Dorsolateral prefrontal cortex (tissue), 120 donors: ENCODE measurements at regions of chr1 and their contacts with region 1.

Region 1: DNA sequence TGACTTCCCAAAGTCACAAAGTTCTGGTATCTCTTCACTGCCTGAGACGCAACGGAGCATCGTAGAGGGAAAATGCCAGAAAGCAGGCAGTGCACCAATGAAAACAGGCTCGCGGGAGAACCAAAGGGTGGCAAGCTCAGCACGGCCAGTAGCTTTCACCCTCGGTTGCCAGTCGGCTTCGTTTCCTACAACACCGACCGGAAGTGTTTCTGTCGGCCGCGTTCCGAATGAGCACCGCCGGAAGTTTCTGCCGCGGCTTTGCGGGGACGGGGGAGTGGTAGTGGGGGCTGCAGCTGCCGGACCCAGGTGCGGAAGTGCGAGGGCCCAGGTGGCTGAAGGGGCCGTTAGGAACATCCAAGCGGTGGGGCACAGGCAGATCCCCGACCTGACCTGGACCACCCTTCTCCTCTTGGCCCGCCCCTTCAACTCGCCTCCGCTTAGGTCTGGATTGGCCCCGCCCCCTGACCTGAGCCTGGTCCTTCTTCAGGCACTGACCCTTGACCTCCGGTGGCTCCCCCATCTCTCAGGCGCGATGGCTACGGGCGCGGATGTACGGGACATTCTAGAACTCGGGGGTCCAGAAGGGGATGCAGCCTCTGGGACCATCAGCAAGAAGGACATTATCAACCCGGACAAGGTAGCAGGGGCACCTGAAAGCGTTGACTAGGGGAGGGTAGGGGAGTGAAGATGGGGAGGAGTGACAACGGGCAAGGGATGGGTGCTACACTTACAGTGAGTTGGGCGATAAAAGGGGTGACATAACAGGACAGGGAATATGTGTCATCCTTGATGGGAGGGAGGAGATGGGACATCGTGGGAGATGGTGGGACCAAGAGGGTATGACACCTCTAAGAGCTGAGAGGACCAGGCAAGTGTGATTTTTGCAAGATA is at the start of gene DMAP1:
- DNase-seq: peak; percentile 82 to 94 (median 89)
- H3K4me3 ChIP-seq: peak within 1 kb of the TSS; percentile 56 to 98 (median 91)
- H3K27ac ChIP-seq: peak within 1 kb of the TSS; percentile 28 to 95 (median 88)
- H3K27me3 ChIP-seq: no peaks in the 10 kb centered on the region
- CTCF ChIP-seq: peak in 48 of 56 donors; percentile 9 to 66 (median 41)
- total RNA-seq, gene DMAP1: 46.6 to 81.3 (median 59.7) TPM

Region 2: GRCh38 chr1:44294588-44295007 is 81.1 kb after region 1 on chr1:
- intact Hi-C with region 1: loop called (anchors 2 to 10 kb)
- DNase-seq: peak in 8 of 10 donors; percentile 23 to 67 (median 46)
- H3K4me3 ChIP-seq: no peak overlapping the region
- H3K27ac ChIP-seq: peak overlapping the region in 6 of 59 donors; percentile 8 to 62 (median 36)
- H3K27me3 ChIP-seq: no peaks in the 10 kb centered on the region
- CTCF ChIP-seq: peak in 54 of 56 donors; percentile 23 to 78 (median 55)

Region 3: GRCh38 chr1:44354840-44355581 is 141.5 kb after region 1 on chr1 and contains the start of gene ERI3:
- intact Hi-C with region 1: loop called in 1 of 2 experiments (anchors 5 kb)
- DNase-seq: peak; percentile 96 to 99 (median 98)
- H3K4me3 ChIP-seq: peak within 1 kb of the TSS; percentile 52 to 100 (median 92)
- H3K27ac ChIP-seq: peak within 1 kb of the TSS in 49 of 59 donors; percentile 0 to 88 (median 64)
- H3K27me3 ChIP-seq: no peaks in the 10 kb centered on the region
- CTCF ChIP-seq: peak in 16 of 56 donors; percentile 8 to 44 (median 19)
- total RNA-seq, gene ERI3: 93.5 to 183 (median 121) TPM

Region 4: DNA sequence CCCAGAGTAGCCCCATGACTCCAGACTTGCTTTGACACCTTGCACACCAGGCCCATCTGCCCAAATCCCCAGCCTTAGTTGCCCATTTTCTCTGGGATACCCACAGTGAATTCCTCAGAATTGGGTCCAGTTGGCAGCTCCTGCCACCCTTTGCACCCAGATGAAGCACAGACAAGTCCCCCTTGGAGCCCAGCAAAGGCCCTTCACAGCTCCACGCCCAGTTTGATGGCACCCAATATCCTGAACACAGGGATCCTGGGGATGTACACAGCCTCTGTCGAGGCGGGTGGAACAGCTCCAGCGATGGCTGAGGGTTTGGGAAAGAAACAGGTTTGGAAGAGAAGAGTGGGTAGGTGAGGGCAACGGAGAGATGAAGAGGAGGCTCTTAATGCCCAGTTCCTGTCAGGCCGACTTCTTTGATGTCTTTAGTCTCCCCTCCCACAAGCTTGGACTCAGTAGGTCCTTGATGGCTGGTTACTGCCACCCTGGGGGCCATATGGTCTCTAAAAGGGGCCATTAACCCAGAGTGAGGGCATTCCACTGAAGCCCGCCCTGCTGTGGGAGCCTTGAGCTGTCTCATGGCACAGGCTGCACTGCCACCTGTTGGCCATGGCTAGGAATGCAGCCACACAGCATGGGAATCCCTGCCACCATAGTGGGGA is 439.1 kb after region 1 on chr1:
- intact Hi-C with region 1: loop called (anchors 2 to 5 kb)
- DNase-seq: peak; percentile 84 to 94 (median 90)
- H3K4me3 ChIP-seq: no peak overlapping the region
- H3K27ac ChIP-seq: peak overlapping the region in 56 of 59 donors; percentile 5 to 94 (median 76)
- H3K27me3 ChIP-seq: no peaks in the 10 kb centered on the region
- CTCF ChIP-seq: peak; percentile 83 to 98 (median 95)